GM10248 (cell line): ENCODE measurements at regions of chr13 and their contacts with region 1.

Region 1: DNA sequence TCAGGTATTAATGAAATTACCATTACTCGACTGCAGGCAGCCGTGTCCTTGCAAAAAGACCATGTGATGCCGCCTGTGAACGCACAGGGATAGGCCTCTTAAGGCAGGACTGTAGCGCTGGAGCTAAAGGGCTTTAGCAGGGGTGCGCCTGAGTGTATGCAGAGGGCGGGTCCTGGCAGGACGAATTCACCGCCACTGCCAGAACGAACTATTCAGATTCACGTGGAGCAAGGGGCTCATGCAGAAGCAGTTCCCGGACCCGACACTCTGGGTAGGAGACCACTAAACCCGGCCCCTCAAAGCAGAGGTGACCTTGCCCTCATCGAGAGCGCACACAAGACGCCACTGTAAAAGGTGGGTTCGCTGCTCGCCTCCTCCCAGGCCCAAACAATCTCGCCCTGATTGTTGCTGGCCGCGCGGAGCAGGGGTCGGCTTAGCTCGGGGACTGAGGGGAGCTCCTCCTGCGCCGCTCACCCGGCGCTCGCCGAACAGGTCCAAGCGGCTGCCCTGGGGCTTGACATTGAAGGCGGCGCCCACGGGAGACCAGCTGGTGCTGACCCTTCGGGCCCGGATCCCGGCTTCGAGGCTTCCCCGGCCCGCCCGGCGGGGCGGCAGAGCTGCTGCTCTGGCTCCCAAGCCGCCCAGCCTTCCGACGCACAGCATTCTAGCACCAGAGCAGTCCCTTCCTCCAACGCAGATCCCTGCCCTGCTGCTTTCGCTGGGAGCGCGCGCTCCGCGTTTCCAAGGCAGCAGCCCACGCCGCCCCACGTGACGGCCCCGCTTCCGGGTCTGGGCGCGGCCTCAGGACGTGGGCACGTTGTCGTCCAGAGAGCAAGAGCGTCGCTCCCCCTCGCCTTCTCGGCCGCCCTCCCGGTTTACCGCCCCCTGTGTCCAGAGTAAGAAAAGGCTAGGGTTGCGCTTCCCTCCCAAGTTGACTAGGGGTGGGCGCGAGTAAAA is at the start of gene MIPEP:
- DNase-seq: peak; percentile 96
- CTCF ChIP-seq: peak; percentile 91

Region 2: DNA sequence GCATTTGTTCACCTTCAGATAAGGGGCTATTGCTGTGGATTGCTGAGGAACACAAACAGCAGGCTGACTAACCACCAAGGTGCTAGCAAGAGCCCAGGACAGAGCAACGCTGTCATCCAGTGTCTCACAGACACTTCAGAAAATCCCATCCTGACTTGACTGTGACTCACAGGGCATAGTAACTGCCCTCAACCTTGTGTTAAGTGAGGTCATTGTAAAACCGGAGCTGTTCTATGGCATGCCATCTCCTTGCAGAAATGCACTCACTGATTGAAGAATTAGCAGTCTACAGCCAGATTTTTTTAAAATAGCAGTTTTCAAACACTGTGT is 267.7 kb before region 1 on chr13:
- CTCF ChIA-PET with region 1: no interaction called
- POLR2A ChIA-PET with region 1: no interaction called
- DNase-seq: no peak
- CTCF ChIP-seq: no peak

Region 3: GRCh38 chr13:23876265-23876664 is 12.7 kb before region 1 on chr13:
- CTCF ChIA-PET with region 1: interaction called, 24 read pairs
- POLR2A ChIA-PET with region 1: no interaction called
- DNase-seq: no peak
- CTCF ChIP-seq: peak; percentile 11